ENCODE measurements at regions of chr2 and their contacts with region 1.

Region 1: DNA sequence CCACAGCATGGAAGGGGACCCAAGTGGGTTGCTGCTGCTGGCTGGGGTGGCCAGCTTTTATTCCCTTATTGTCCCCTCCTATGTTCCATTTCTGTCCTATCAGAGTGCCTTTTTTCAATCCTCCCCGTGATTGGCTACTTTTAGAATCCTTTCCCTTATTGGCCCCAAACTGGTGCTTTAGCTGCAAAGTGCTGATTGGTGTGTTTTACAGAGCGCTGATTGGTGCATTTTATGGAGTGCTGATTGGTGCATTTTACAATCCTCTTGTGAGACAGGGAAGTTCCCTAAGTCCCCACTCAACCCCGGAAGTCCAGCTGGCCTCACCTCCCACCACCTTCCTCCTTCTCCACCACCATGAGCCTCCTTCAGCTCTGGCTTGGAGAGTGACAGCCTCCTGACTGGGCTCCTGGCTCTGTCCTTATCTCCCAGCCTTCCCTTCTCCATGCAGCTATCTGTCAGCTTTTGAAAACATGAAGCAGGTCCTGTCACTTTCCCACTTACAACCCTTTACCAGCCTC is 20.7 kb upstream of the PLB1 start:
- DNase-seq: no peak
- H3K4me3 ChIP-seq: no peak overlapping the region
- CTCF ChIP-seq: no peak

Region 2: GRCh38 chr2:28413142-28413898 is 61.8 kb before region 1 on chr2:
- in situ Hi-C with region 1: no loop called
- DNase-seq: no peak
- H3K4me3 ChIP-seq: no peak overlapping the region
- CTCF ChIP-seq: no peak

Region 3: GRCh38 chr2:28424799-28425463 is 50.2 kb before region 1 on chr2:
- in situ Hi-C with region 1: loop called (anchors 5 kb)
- DNase-seq: no peak
- H3K4me3 ChIP-seq: no peak overlapping the region
- CTCF ChIP-seq: no peak

Measured in astrocyte of the cerebellum (primary cell).